ENCODE measurements at regions of chr17 and their contacts with region 1.

Region 1: DNA sequence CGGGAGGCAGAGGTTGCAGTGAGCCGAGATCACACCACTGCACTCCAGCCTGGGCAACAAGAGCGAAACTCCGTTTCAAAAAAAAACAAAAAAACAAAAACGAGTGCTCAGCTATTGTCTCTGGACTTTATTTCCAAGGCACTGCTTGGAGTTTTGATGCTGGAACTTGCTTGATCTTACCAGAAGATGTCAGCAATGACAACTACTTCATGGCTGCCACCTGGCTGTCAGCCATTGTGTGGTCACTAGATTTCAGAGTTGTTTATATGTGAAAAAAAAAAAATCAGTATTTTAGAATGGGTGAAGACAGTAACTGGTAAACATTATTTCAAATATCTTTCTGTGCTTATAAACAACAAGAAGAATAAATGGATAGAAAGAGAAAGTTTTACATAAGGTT is 26.3 kb upstream of the OR4D1 start:
- DNase-seq: peak; percentile 51 to 68 (median 65)
- H3K4me3 ChIP-seq: no peak overlapping the region
- H3K4me3 Mint-ChIP-seq: peak overlapping the region in 1 of 8 donors; percentile 61
- H3K27ac ChIP-seq: no peak overlapping the region
- H3K27ac Mint-ChIP-seq: peak overlapping the region in 1 of 7 donors; percentile 22
- H3K4me1 ChIP-seq: peaks cover 8% of the 10 kb centered on the region
- H3K4me1 Mint-ChIP-seq: peaks cover 9 to 18% (median 15%) of the 10 kb centered on the region in 4 donors
- H3K27me3 ChIP-seq: no peaks in the 10 kb centered on the region
- H3K27me3 Mint-ChIP-seq: peaks cover 5 to 11% of the 10 kb centered on the region in 2 donors

Region 2: DNA sequence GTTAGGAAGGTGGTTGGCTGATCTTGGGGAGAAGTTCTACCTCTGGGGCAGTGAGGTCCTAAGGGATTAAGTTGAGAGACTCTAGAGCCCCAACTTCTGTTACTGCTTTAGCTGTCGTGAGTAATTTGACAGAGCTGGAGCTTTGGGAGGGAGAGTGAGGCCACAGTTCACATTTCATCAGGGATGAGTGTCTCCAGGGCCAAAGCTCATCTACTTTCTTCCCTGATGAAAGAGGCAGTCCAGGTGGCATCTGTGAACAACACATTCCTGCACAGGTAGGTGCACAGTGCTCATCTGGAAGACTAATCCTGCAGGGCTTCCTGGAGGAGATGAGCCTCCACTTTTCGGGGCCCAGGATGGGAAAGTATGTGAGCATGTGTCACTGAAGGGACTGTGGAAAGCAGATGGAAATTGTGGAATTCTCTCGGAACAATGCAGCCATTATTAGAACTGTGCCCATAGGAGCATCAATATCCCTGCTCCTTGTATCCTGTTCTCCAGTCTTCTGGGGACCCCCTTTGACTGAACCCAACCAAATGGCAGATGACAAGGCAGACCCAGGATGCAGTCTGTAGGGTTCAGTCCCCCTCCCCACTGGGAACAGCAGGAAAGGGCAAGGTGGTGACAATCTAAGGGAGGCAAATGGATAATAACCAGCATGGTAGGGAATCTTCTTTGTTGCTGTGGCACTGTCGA is 29.7 kb before region 1 on chr17:
- CTCF ChIA-PET with region 1: no interaction called
- POLR2A ChIA-PET with region 1: no interaction called
- intact Hi-C with region 1: no loop called
- DNase-seq: no peak
- H3K4me3 ChIP-seq: no peak overlapping the region
- H3K4me3 Mint-ChIP-seq: no peak overlapping the region
- H3K27ac ChIP-seq: no peak overlapping the region
- H3K27ac Mint-ChIP-seq: peak overlapping the region in 4 of 7 donors; percentile 14 to 59 (median 31)
- H3K4me1 ChIP-seq: peaks cover 11% of the 10 kb centered on the region
- H3K4me1 Mint-ChIP-seq: peaks cover 20 to 37% (median 29%) of the 10 kb centered on the region in 4 donors
- H3K27me3 ChIP-seq: no peaks in the 10 kb centered on the region
- H3K27me3 Mint-ChIP-seq: no peaks in the 10 kb centered on the region

Region 3: GRCh38 chr17:58105093-58105492 is 16.8 kb before region 1 on chr17:
- CTCF ChIA-PET with region 1: no interaction called
- POLR2A ChIA-PET with region 1: no interaction called
- intact Hi-C with region 1: no loop called
- DNase-seq: no peak
- H3K4me3 ChIP-seq: no peak overlapping the region
- H3K4me3 Mint-ChIP-seq: no peak overlapping the region
- H3K27ac ChIP-seq: no peak overlapping the region
- H3K27ac Mint-ChIP-seq: no peak overlapping the region
- H3K4me1 ChIP-seq: no peaks in the 10 kb centered on the region
- H3K4me1 Mint-ChIP-seq: no peaks in the 10 kb centered on the region
- H3K27me3 ChIP-seq: no peaks in the 10 kb centered on the region
- H3K27me3 Mint-ChIP-seq: no peaks in the 10 kb centered on the region

Region 4: GRCh38 chr17:58165981-58166380 is 44.1 kb after region 1 on chr17:
- CTCF ChIA-PET with region 1: interaction called, 191 read pairs
- POLR2A ChIA-PET with region 1: interaction called, 32 read pairs
- intact Hi-C with region 1: no loop called
- DNase-seq: peak in 3 of 5 donors; percentile 8 to 22 (median 20)
- H3K4me3 ChIP-seq: no peak overlapping the region
- H3K4me3 Mint-ChIP-seq: no peak overlapping the region
- H3K27ac ChIP-seq: no peak overlapping the region
- H3K27ac Mint-ChIP-seq: no peak overlapping the region
- H3K4me1 ChIP-seq: peaks cover 40% of the 10 kb centered on the region
- H3K4me1 Mint-ChIP-seq: peaks cover 41 to 72% (median 50%) of the 10 kb centered on the region in 4 donors
- H3K27me3 ChIP-seq: no peaks in the 10 kb centered on the region
- H3K27me3 Mint-ChIP-seq: no peaks in the 10 kb centered on the region

Region 5: DNA sequence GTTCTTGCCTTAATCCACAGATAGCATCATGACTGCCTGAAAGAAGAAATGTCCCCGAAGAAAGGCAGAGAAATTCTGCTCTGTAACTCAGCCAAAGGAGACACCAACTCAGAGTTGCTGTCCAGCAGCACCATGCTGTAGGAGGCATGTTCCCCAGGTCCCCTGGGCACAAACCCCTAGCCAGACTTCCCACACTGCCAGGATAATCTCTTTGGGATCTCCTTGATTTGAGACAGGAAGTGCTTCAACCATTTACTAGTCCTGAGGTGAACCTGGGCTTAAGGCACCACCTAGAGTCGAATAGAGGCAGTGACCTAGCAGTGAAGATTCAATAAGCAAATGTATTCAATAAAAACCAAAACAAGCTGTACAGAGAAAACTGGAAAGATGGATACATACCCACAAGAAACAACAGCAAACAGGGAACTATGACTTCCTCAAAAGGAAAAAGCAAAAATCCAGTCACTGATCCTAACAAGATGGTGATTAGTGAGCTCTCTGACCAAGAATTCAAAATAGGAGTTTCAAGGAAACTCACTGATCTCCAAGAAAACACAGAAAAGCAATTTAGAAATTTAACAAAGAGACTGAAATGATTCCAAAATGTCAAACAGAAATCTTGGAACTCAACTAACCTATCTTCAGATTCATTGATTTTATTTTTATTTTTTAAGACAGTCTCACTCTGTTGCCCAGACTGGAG is 50.6 kb after region 1 on chr17:
- CTCF ChIA-PET with region 1: interaction called, 191 read pairs
- POLR2A ChIA-PET with region 1: interaction called, 32 read pairs
- intact Hi-C with region 1: loop called (anchors 1 kb)
- DNase-seq: peak; percentile 62 to 72 (median 66)
- H3K4me3 ChIP-seq: no peak overlapping the region
- H3K4me3 Mint-ChIP-seq: peak overlapping the region; percentile 16 to 69 (median 51)
- H3K27ac ChIP-seq: no peak overlapping the region
- H3K27ac Mint-ChIP-seq: peak overlapping the region in 6 of 7 donors; percentile 15 to 92 (median 89)
- H3K4me1 ChIP-seq: peaks cover 47% of the 10 kb centered on the region
- H3K4me1 Mint-ChIP-seq: peaks cover 40 to 50% (median 44%) of the 10 kb centered on the region in 4 donors
- H3K27me3 ChIP-seq: no peaks in the 10 kb centered on the region
- H3K27me3 Mint-ChIP-seq: peaks cover under 1% of the 10 kb centered on the region in 2 donors